ENCODE measurements at regions of chr12 and their contacts with region 1.

Region 1: GRCh38 chr12:49967042-49967776 is 5.5 kb downstream of the AQP5 start:
- DNase-seq: peak; percentile 63 to 99
- H3K4me3 ChIP-seq: peak overlapping the region in 3 of 4 experiments; percentile 31 to 53 (median 45); a peak in 6 of 8 replicates
- H3K27ac ChIP-seq: no peak overlapping the region
- H3K4me1 ChIP-seq: peaks cover 0 to 9% (median 3%) of the 10 kb centered on the region in 4 experiments; a peak in 5 of 7 replicates
- H3K27me3 ChIP-seq: peaks cover 0 to 40% (median 21%) of the 10 kb centered on the region in 4 experiments; a peak in 6 of 7 replicates
- CTCF ChIP-seq: peak in 2 of 3 experiments; percentile 96; a peak in 3 of 4 replicates
- EP300 ChIP-seq: no peak
- POLR2A ChIP-seq: no peak
- RAD21 ChIP-seq: peak; percentile 90 to 94

Region 2: DNA sequence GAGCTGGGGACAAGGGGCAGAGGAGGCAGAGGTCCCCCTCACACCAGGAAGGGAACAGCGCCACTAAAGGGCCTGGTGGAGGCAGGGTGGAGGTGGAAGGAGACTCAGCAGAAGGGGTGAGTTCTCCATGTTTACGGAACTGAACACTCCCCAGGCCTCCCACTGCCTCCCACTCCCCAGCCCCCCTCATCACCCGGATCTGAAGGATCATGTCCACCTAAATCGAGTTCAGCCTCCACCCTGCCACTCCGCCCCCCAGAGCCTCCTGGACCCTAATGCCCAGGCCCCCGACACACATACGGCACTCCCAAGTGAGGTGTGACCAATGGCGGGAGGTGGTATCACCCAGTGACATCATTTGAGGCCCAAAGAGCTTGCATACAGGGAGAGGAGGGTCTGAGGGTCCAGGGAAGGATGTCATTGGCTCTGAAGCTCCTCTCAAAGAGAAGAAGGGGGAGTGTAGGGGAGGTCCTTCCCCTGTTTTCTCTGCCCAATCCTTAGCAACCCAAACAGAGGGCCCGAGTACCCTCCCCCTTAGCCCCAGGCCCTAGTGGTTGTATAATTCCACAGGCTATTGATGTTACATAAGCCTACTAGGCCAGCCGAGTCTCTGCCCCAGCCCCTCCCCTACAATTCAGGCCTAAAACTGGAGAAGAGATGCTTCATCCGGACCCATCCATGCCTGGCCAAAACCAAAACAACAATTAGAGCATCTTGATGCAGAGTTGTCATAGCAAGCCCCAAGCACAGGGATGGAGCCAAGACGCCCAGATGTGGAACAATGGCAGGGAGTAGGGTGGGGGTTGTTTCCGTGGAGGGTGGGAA is 64.5 kb before region 1 on chr12:
- CTCF ChIA-PET with region 1: interaction called, 14 read pairs
- POLR2A ChIA-PET with region 1: no interaction called
- DNase-seq: no peak
- H3K4me3 ChIP-seq: no peak overlapping the region
- H3K27ac ChIP-seq: no peak overlapping the region
- H3K4me1 ChIP-seq: peaks cover 0 to 9% (median 1%) of the 10 kb centered on the region in 4 experiments; a peak in 5 of 7 replicates
- H3K27me3 ChIP-seq: peaks cover 0 to 19% (median 16%) of the 10 kb centered on the region in 4 experiments; a peak in 5 of 7 replicates
- CTCF ChIP-seq: peak; percentile 35 to 59 (median 57)
- EP300 ChIP-seq: no peak
- POLR2A ChIP-seq: no peak
- RAD21 ChIP-seq: peak; percentile 14 to 43; a peak in 2 of 4 replicates

Region 3: DNA sequence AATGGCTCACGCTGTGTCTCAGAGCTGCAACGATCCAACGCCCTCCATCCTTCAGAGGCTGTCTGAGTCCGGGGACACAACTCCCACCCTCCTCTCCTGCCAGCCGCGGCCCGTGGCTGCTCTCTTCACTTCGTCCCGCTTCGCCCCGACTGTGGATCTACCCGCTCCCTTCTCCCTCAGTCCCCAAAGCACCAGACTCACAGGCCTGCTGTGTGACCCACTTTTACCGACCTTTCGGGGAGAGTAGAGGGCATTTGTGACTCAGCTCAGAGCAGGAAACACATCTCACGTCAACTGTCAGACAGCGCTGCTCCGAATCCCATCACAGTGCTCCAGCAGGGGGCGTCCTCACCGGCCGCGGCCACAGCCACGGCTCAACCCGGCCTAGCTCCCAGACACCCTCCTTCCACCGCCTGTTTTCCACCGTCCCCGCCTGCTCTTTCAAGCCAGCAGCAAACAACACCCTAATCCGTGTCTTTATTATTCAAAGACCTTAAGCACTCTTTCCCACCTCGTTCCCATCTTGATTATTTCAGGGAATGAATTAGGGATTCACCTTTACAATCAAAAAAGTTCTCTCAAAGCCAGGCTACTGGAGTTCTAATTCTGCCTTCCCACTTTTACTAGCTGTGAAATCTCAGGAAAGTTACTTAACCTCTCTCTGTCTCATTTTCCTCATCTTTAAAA is 21.7 kb before region 1 on chr12:
- CTCF ChIA-PET with region 1: interaction called, 104 read pairs
- POLR2A ChIA-PET with region 1: interaction called, 8 read pairs
- DNase-seq: peak; percentile 77 to 97
- H3K4me3 ChIP-seq: peak overlapping the region in 2 of 4 experiments; percentile 16 to 44; a peak in 4 of 8 replicates
- H3K27ac ChIP-seq: no peak overlapping the region
- H3K4me1 ChIP-seq: peaks cover 3 to 17% (median 4%) of the 10 kb centered on the region in 4 experiments; a peak in 6 of 7 replicates
- H3K27me3 ChIP-seq: peaks cover 0 to 3% (median 0%) of the 10 kb centered on the region in 4 experiments; a peak in 1 of 7 replicates
- CTCF ChIP-seq: peak; percentile 87 to 95 (median 89)
- EP300 ChIP-seq: no peak
- POLR2A ChIP-seq: no peak
- RAD21 ChIP-seq: peak; percentile 54 to 64

Region 4: DNA sequence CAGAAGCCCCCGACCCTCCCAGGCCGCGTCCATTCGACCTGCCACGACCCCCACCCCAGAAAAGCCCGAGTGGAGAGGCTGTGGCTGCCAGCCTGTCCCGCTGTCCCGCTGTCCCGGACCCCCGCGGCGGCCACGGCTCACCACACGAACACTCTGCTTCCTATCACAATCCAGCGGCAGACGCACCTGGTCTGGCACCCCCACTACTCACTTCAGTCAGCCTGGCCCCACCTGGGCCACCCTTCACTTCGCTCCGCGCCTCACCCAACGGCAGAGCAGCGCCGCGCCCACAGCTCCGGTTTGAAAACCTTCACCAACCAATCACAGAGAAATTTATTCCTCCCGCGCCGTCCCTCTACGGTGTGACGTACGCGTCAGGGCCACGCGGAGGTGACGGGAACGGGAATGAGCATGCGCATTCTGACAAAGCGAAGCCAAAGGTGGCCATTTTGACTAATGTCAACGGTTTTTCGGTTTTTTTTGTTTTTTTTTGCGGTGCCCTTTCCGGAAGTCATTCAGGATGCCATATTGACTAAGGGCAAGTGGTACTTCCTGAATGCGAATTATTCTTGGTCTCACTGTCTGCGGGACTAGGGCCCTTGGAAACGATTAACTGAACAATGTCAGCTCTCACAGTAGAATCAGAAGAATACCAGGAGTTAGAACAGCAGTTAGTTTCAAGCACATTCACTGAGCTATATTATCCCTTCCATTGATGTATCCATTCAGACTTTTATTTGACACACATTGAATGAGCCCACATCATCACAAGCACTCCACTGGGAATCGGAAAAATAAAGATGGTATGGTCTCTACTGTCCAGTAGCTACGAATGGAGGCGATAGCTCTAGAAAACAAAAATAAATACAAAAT is 58.2 kb after region 1 on chr12 and contains the start of gene RACGAP1:
- CTCF ChIA-PET with region 1: interaction called, 18 read pairs
- POLR2A ChIA-PET with region 1: interaction called, 4 read pairs
- DNase-seq: peak; percentile 90 to 94
- H3K4me3 ChIP-seq: peak within 1 kb of the TSS; percentile 81 to 86 (median 82)
- H3K27ac ChIP-seq: no peak within 1 kb of the TSS
- H3K4me1 ChIP-seq: no peaks in the 10 kb centered on the region
- H3K27me3 ChIP-seq: no peaks in the 10 kb centered on the region
- CTCF ChIP-seq: no peak
- EP300 ChIP-seq: no peak
- POLR2A ChIP-seq: no peak; a peak in 1 of 3 replicates
- RAD21 ChIP-seq: no peak
- total RNA-seq, gene RACGAP1: 63.5 and 66.3 TPM in 2 replicates

Region 5: DNA sequence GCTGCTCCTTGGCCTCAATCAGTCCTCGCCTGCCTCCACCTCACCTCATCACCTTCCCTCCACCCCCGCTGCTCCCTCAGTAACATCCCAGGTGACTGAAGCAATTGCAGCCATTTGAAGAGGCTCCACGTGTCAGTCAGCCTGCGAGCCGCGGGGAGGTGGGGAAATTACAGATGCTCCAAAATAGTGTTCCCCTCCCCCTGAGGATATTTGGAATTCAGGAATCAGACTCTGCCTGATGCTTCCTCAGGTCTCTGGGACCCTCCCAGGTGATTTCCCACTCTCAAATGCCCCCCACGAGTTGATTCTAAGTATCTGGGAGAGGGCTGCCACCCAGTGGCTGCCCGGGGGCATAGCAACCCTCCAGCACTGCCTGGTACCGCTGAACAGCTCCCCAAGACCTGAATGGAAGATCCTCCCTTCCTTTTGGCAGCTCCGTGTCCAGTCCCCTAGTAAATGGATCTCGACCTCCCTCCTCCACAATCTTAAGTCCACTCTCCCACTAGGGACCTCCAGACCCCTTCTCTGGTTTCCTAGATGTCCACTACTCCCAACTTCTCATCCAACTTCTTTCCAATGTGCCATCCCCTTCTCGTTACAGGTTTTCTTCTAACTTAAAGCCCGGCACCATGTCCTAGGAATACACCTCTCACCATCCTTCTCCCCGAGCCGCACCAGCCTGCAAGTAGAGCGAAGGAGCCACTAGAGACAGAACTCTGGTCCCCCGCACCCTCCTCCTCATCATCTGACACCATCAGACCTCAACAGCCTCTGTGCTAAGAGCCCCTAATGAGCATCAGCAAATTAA is 88.8 kb after region 1 on chr12:
- CTCF ChIA-PET with region 1: interaction called, 420 read pairs
- POLR2A ChIA-PET with region 1: interaction called, 7 read pairs
- DNase-seq: peak in 1 of 2 experiments; percentile 82
- H3K4me3 ChIP-seq: peak overlapping the region in 2 of 4 experiments; percentile 17 to 74; a peak in 5 of 8 replicates
- H3K27ac ChIP-seq: no peak overlapping the region
- H3K4me1 ChIP-seq: peaks cover 3 to 16% (median 10%) of the 10 kb centered on the region in 4 experiments
- H3K27me3 ChIP-seq: peaks cover 35 to 91% (median 73%) of the 10 kb centered on the region in 4 experiments
- CTCF ChIP-seq: peak; percentile 90 to 96 (median 91)
- EP300 ChIP-seq: no peak
- POLR2A ChIP-seq: no peak
- RAD21 ChIP-seq: peak; percentile 89 to 92

Measured in H1 (cell line).